Left cardiac atrium (tissue), 4 donors: ENCODE measurements at regions of chr1 and their contacts with region 1.

Region 1: DNA sequence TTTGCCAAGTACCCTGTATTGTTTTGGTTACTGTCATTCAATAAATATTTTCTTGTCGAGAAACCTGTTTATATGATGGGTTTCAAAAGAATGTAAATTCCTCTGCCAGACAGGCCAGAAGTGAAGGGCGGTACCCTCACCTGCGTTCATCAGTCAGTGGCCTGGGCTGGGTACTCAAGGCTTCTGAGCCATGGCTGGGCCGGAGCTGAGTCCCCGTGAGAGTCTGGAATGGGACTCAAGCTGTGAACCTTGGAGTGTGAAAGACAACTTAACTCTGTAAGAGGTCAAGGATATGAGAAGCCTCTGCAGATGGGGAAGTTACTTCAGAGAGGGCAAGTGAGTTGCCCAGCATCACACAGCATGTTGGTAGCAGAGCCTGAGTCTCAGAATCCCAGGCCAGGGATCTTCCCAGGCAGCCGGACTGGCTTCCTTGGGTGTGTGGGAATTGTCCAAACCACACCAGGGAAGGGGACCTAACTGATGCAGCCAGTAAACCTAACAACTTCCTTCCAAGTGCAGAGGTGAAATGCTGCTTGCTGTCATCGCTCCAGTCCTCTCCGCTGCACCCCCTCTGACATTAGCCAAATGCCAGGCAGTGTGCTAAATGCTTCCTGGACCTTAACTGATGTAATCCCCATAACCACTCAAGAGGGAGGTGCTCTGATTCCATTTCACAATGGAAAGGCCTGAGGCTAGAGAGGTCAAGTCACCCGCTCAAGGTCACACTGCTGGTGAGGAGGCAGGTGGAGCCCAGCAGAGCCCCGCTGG is 4.8 kb downstream of the DISP3 start:
- DNase-seq: no peak
- ATAC-seq: peak in 1 of 2 donors; percentile 14

Region 2: GRCh38 chr1:11458811-11459275 is 24.9 kb before region 1 on chr1:
- intact Hi-C with region 1: no loop called
- DNase-seq: peak; percentile 28
- ATAC-seq: peak; percentile 77 to 92

Region 3: GRCh38 chr1:11629184-11630016 is 145.7 kb after region 1 on chr1:
- intact Hi-C with region 1: loop called in 1 of 2 experiments (anchors 10 kb)
- DNase-seq: no peak
- ATAC-seq: no peak